ENCODE measurements at regions of chr17 and their contacts with region 1.

Region 1: DNA sequence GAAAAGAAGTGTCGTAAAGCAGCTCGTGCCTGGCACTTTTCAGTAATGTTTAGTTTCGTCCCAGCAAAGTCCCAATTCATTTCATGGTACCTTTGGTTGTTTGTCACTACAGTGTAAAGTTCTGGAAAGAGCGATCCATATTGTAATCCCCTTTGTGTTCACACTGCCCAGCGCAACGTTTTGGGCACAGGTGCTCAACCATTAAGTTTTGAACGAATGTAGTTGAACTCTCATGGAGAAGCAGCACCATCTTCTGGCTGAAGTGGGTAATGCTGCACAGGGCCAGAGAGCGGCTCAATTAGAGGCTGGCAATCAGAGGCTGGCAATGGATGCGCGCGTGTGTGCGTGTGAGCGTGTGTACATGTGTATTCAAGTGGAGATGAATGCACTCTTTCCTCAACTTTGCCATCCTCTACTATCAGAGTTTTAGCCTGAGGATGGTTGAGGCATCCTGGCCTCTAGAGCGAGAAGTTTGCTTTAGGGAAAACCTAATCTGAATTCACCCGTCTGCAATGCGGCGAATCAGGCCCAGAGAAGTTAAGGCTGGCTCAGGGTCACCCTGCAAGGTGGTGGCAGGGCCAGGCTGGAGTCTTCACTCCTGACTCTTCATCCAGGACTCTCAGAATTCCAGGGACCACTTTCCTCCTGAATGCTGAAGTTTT is 29.9 kb downstream of the DYNLL2 start:
- DNase-seq: peak; percentile 81 to 90 (median 84)
- ATAC-seq: peak; percentile 89
- H3K4me3 ChIP-seq: no peak overlapping the region
- H3K27ac ChIP-seq: no peak overlapping the region
- H3K4me1 ChIP-seq: no peaks in the 10 kb centered on the region
- H3K27me3 ChIP-seq: no peaks in the 10 kb centered on the region
- CTCF ChIP-seq: peak; percentile 87 to 96 (median 93)
- POLR2A ChIP-seq: no peak

Region 2: DNA sequence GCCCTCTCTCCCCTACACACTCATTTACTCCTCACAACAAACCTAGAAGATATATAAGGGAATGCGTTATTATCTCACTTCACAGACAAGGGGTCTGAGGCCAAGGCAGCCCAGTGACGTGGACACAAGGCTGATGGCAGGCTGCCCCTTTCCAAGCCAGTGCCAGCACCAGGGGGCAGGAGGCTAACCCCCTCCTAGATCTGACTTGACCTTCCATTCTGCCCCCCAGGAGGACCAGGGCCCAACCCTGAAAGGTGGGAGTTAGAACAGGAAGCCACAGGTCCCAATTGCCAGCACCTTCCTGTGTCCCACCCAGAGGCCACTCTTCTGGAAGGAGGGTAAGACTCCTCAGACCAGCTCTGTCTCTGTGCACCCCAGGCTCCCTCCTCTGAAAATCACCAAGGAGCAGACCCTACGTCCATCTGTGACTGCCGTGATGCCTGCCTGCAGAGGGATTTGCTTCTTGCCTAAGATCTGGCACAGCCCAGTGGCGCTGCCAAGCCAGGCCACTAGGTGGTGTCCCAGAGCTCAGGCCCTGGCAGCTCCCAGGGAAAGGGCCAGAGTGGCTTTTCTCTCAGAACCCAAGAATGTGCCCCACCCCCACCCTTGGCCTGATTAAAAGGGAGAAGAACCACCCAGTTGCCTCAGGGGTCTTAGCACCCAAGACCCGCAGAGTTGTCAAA is 220.8 kb before region 1 on chr17:
- intact Hi-C with region 1: no loop called
- DNase-seq: peak; percentile 90 to 95 (median 92)
- ATAC-seq: peak; percentile 68
- H3K4me3 ChIP-seq: no peak overlapping the region
- H3K27ac ChIP-seq: peak overlapping the region; percentile 92 to 99 (median 94)
- H3K4me1 ChIP-seq: peaks cover 79% of the 10 kb centered on the region
- H3K27me3 ChIP-seq: no peaks in the 10 kb centered on the region
- CTCF ChIP-seq: peak; percentile 94 to 98 (median 98)
- POLR2A ChIP-seq: no peak

Region 3: DNA sequence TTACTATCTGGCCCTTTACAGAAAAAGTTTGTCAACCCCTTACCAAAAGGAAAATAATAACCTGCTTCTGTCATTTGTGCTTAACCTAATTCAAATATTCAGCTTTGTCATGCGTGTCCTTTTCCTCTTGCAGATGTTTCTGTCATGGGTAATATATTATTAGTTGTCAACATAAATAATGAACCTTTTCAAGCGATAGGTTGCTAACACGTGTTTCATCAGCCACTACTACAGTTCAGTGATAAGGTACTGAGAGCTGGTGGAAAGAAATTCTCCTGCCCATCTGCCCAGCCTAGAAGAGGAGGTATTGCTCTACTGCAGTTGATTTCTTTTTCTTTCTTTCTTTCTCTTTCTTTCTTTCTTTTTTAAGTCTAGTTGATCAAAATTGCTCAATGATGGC is 94.1 kb before region 1 on chr17:
- intact Hi-C with region 1: loop called (anchors 10 kb)
- DNase-seq: no peak
- ATAC-seq: no peak
- H3K4me3 ChIP-seq: no peak overlapping the region
- H3K27ac ChIP-seq: no peak overlapping the region
- H3K4me1 ChIP-seq: peaks cover 4% of the 10 kb centered on the region
- H3K27me3 ChIP-seq: no peaks in the 10 kb centered on the region
- CTCF ChIP-seq: no peak
- POLR2A ChIP-seq: no peak